ENCODE measurements at regions of chr18 and their contacts with region 1.

Region 1: GRCh38 chr18:7812431-7813063 is 245.4 kb downstream of the PTPRM start:
- DNase-seq: no peak
- H3K4me3 ChIP-seq: no peak overlapping the region
- H3K27ac ChIP-seq: peak overlapping the region in 2 of 4 donors; percentile 10 to 24
- H3K4me1 ChIP-seq: peaks cover 18 to 60% (median 29%) of the 10 kb centered on the region in 4 donors
- H3K27me3 ChIP-seq: no peaks in the 10 kb centered on the region
- CTCF ChIP-seq: no peak
- EP300 ChIP-seq: no peak
- POLR2A ChIP-seq: no peak

Region 2: DNA sequence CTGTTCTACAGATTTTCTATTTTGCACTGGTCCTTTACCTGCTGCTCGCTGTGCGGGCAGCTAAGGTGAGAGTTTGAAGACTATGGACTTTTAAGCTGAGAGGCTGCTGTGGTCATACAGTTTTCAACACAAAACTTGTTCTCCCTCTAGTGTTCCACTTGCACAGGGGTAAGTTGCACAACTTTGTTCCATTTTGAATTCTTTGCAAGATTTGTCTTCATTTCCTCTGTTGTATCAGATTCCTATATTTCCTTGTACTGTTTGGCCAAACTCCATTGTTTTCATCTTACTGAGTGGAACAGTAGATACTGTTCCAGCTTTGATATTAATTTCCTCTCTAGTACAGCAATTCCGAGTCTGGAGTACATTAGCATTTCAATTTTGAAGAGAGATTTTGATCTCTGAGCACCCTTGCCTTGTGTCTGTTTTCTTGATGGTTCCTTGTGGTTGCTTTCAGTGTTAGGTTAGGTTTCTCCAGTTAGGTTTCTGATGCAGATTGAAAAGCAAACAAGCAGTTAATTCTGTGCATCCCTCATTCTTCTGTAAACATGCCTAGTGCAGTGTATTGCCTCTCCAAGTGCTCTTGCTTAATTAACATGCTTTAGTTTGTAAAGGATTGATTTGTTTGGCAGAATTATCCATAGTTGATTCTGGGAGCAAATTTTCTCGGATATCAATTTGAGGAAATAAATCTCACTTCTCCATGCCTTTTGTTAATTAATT is 56.6 kb before region 1 on chr18:
- intact Hi-C with region 1: no loop called
- DNase-seq: no peak
- H3K4me3 ChIP-seq: no peak overlapping the region
- H3K27ac ChIP-seq: peak overlapping the region in 1 of 4 donors; percentile 21
- H3K4me1 ChIP-seq: peaks cover 32 to 47% (median 39%) of the 10 kb centered on the region in 4 donors
- H3K27me3 ChIP-seq: no peaks in the 10 kb centered on the region
- CTCF ChIP-seq: peak in 2 of 3 experiments; percentile 21 to 48
- EP300 ChIP-seq: no peak
- POLR2A ChIP-seq: no peak

Region 3: DNA sequence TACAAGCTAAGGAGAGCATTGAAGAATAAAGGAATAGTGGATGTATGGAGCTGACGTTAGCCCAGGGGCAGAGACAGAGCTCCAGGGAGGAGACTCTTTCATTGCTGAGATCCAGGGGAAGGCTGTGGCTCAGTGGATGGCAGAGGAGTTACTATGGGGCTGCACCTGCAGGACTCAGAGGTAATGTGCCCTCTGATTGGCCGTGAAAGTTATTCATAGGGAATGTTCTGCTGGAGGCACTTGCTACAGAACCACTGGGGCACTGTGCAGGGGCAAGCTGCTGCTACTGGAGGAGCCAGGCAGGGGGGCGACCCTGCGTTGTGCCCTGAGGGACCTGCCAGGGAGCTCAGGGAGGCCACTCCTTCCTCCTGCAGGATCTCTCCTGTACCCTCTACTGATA is 46.2 kb before region 1 on chr18:
- intact Hi-C with region 1: no loop called
- DNase-seq: no peak
- H3K4me3 ChIP-seq: no peak overlapping the region
- H3K27ac ChIP-seq: no peak overlapping the region
- H3K4me1 ChIP-seq: peaks cover 10 to 35% (median 20%) of the 10 kb centered on the region in 4 donors
- H3K27me3 ChIP-seq: no peaks in the 10 kb centered on the region
- CTCF ChIP-seq: no peak
- EP300 ChIP-seq: no peak
- POLR2A ChIP-seq: no peak

Region 4: GRCh38 chr18:8045884-8046281 is 233.3 kb after region 1 on chr18:
- intact Hi-C with region 1: no loop called
- DNase-seq: no peak
- H3K4me3 ChIP-seq: no peak overlapping the region
- H3K27ac ChIP-seq: no peak overlapping the region
- H3K4me1 ChIP-seq: peaks cover 9 to 14% (median 11%) of the 10 kb centered on the region in 4 donors
- H3K27me3 ChIP-seq: no peaks in the 10 kb centered on the region
- CTCF ChIP-seq: no peak
- EP300 ChIP-seq: no peak
- POLR2A ChIP-seq: no peak

Region 5: DNA sequence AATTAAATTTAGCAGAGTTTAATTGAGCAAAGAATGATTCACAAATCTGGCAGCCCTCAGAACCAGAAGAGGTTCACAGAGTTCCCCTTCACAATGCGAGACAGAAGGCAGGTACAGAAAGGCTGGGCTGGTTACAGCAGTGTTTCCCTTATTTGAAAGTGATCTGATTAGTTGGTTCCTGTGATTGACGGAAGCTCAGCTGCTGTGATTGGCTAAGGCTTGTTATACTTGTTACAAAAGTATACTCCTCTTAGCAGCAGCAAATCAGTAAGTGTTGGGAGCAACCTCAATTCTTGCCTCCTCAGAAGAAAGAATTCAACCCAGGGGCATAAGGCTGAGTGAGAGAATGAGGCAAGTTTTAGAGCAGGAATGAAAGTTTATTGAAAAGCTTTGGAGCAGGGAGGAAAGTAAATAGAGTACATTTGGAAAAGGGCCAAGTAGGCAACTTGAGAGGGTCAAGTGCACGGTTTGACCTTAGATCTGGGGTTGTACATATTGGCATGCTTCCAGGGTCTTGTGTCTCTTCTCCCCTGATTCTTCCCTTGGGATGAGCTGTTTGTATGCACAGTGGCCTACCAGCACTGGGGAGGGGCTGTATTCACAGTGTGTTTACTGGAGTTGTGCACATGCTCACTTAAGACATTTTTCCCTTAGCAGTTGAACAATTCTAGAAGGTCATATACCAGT is 364.9 kb after region 1 on chr18:
- intact Hi-C with region 1: loop called (anchors 10 kb)
- DNase-seq: no peak
- H3K4me3 ChIP-seq: no peak overlapping the region
- H3K27ac ChIP-seq: peak overlapping the region in 3 of 4 donors; percentile 4 to 37 (median 24)
- H3K4me1 ChIP-seq: peaks cover 28 to 35% (median 34%) of the 10 kb centered on the region in 4 donors
- H3K27me3 ChIP-seq: no peaks in the 10 kb centered on the region
- CTCF ChIP-seq: no peak
- EP300 ChIP-seq: no peak
- POLR2A ChIP-seq: no peak

Measured in esophagus muscularis mucosa (tissue), 4 donors.